Sigmoid colon (tissue), 7 donors: ENCODE measurements at regions of chr17 and their contacts with region 1.

Region 1: GRCh38 chr17:44919885-44920564 is 4.7 kb upstream of the GFAP start:
- DNase-seq: peak; percentile 94
- H3K4me3 ChIP-seq: no peak overlapping the region
- H3K27ac ChIP-seq: no peak overlapping the region
- H3K4me1 ChIP-seq: peaks cover 0 to 23% (median 20%) of the 10 kb centered on the region in 4 donors
- H3K27me3 ChIP-seq: no peaks in the 10 kb centered on the region
- CTCF ChIP-seq: peak; percentile 79 to 91 (median 89)
- EP300 ChIP-seq: no peak
- POLR2A ChIP-seq: no peak

Region 2: GRCh38 chr17:44084131-44084544 is 835.9 kb before region 1 on chr17:
- intact Hi-C with region 1: loop called (anchors 5 kb)
- DNase-seq: no peak
- H3K4me3 ChIP-seq: no peak overlapping the region
- H3K27ac ChIP-seq: no peak overlapping the region
- H3K4me1 ChIP-seq: peaks cover 0 to 19% (median 15%) of the 10 kb centered on the region in 4 donors
- H3K27me3 ChIP-seq: no peaks in the 10 kb centered on the region
- CTCF ChIP-seq: no peak
- EP300 ChIP-seq: no peak
- POLR2A ChIP-seq: no peak

Region 3: DNA sequence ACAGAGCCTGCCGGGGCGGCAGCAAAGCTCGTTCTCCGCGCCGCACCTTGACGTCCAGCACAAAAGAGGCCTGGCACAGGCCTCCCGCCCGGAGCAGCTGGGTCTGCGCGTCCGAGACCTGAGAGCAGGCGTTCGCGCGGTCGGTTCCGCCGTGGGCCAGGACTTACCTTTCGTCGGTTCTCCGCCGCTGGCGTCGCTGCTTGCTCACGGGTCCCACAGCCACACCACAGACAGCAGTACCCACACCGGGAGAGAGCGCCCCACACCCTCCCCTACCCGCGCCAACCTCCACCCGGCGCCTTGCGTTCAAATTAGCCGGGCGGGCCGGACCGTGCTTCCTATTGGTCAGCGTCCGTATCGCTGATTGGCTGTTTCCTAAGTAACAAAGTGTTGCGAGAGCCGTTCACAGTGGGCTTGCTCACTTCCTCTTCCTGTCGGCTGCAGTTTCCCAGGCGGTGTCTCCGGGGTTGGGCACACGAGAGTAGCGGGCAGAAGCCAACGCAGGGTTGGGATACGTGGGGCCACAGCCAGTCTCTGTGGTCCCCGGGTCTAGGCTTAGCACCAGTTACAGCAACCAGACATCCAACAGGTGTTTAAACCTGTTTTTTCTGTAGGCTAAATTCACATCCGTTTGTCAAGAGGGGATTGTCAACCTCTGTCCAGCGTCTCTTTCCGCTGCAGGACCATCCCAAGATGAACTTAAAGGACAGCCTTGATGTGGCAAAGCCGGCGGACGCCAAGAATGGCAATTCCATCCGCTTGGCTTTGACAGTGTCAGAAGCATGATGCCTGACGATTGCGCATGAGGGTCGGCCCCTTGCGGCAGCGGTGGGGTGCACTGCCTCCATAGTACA is 27.7 kb after region 1 on chr17 and contains the start of gene KIF18B:
- intact Hi-C with region 1: loop called (anchors 2 kb)
- DNase-seq: peak; percentile 95
- H3K4me3 ChIP-seq: peak within 1 kb of the TSS; percentile 27 to 61 (median 50)
- H3K27ac ChIP-seq: peak within 1 kb of the TSS; percentile 42 to 65 (median 60)
- H3K4me1 ChIP-seq: peaks cover 0 to 12% (median 9%) of the 10 kb centered on the region in 4 donors
- H3K27me3 ChIP-seq: no peaks in the 10 kb centered on the region
- CTCF ChIP-seq: no peak
- EP300 ChIP-seq: no peak
- POLR2A ChIP-seq: peak; percentile 52 to 64
- total RNA-seq, gene KIF18B: under 0.01 to 1.4 (median 0.30) TPM

Region 4: GRCh38 chr17:45098869-45099616 is 179.0 kb after region 1 on chr17:
- intact Hi-C with region 1: loop called (anchors 1 kb)
- DNase-seq: peak; percentile 97
- H3K4me3 ChIP-seq: no peak overlapping the region
- H3K27ac ChIP-seq: peak overlapping the region; percentile 30 to 79 (median 50)
- H3K4me1 ChIP-seq: peaks cover 0 to 25% (median 21%) of the 10 kb centered on the region in 4 donors
- H3K27me3 ChIP-seq: no peaks in the 10 kb centered on the region
- CTCF ChIP-seq: peak; percentile 77 to 92 (median 86)
- EP300 ChIP-seq: no peak
- POLR2A ChIP-seq: no peak

Region 5: DNA sequence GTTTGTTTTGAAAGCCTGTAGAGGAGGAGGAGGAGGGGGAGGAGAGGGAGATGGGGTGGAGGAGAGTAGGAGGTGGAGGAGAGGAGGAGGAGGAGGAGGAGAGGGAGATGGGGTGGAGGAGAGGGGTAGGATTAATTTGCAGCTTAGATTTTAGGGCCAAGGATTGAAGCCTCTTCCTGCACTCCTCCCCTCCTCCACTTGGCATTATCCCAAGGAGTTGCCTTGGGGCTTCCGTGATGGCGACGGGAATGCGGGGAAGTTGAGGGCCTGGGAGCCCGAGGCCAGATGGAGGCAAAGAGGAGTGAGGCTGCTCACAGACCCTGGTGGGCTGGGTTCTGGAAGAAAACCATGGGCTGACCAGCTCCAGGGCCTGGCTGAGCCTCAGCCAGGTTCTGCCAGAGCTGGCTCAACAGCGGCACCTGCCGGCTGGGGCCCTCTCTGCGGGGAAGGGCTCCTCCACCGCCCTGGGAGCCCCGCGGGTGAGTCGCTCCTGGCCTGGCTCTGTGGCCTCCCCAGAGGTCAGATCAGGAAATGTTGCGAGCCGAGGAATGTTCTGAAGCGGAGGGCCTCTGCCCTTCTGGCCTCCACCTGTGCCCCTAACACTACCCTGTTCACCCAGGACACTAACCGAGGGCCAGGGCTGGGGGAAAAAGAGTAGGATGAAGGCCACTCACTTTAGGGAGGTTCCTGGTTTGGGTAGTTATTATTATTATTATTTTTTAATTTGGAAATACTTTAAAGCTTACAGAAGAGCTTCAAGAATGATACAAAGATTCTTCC is 277.7 kb after region 1 on chr17:
- intact Hi-C with region 1: loop called (anchors 10 kb)
- DNase-seq: peak; percentile 95
- H3K4me3 ChIP-seq: no peak overlapping the region
- H3K27ac ChIP-seq: peak overlapping the region; percentile 58 to 77 (median 70)
- H3K4me1 ChIP-seq: peaks cover 0 to 15% (median 11%) of the 10 kb centered on the region in 4 donors
- H3K27me3 ChIP-seq: no peaks in the 10 kb centered on the region
- CTCF ChIP-seq: peak; percentile 99
- EP300 ChIP-seq: no peak
- POLR2A ChIP-seq: no peak